ENCODE measurements at regions of chr11 and their contacts with region 1.

Region 1: DNA sequence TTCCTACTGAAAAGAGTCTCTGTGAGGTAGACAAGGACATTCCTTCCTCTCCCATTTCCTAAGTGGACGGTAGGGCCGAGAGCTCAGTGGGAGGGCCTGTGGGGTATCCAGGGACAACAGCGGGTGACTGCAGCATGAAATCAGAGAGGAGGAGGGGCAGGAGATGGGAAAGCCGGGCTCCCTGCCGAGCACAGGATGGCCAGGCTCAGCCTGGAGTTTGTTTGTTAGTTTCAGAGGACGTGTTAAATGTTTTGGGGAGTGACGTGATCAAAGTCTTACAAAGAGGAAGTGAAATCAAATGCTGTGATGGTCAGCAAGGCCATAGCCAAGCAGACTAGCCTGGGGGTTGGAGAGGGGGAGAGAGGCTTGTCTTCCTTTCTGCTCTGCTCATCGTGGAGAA is 152.7 kb downstream of the ADAMTS15 start:
- DNase-seq: peak; percentile 36 to 81 (median 69)
- H3K4me3 ChIP-seq: no peak overlapping the region
- H3K27ac ChIP-seq: no peak overlapping the region
- H3K4me1 ChIP-seq: no peaks in the 10 kb centered on the region
- H3K27me3 ChIP-seq: no peaks in the 10 kb centered on the region
- CTCF ChIP-seq: no peak
- EP300 ChIP-seq: no peak
- POLR2A ChIP-seq: no peak

Region 2: GRCh38 chr11:130124096-130124495 is 477.0 kb before region 1 on chr11:
- intact Hi-C with region 1: no loop called
- DNase-seq: peak in 1 of 5 donors; percentile 38
- H3K4me3 ChIP-seq: no peak overlapping the region
- H3K27ac ChIP-seq: no peak overlapping the region
- H3K4me1 ChIP-seq: no peaks in the 10 kb centered on the region
- H3K27me3 ChIP-seq: no peaks in the 10 kb centered on the region
- CTCF ChIP-seq: no peak
- EP300 ChIP-seq: no peak
- POLR2A ChIP-seq: no peak

Region 3: GRCh38 chr11:130427581-130428315 is 173.4 kb before region 1 on chr11:
- intact Hi-C with region 1: no loop called
- DNase-seq: peak in 2 of 5 donors; percentile 37 to 49
- H3K4me3 ChIP-seq: peak overlapping the region; percentile 38
- H3K27ac ChIP-seq: no peak overlapping the region
- H3K4me1 ChIP-seq: peaks cover 2% of the 10 kb centered on the region
- H3K27me3 ChIP-seq: no peaks in the 10 kb centered on the region
- CTCF ChIP-seq: no peak
- EP300 ChIP-seq: no peak
- POLR2A ChIP-seq: no peak

Region 4: GRCh38 chr11:130449996-130450769 is 151.0 kb before region 1 on chr11:
- intact Hi-C with region 1: loop called in 1 of 4 experiments (anchors 10 kb)
- DNase-seq: peak; percentile 48 to 83 (median 72)
- H3K4me3 ChIP-seq: peak overlapping the region; percentile 52
- H3K27ac ChIP-seq: no peak overlapping the region
- H3K4me1 ChIP-seq: peaks cover 6% of the 10 kb centered on the region
- H3K27me3 ChIP-seq: no peaks in the 10 kb centered on the region
- CTCF ChIP-seq: peak in 2 of 3 donors; percentile 7 to 59
- EP300 ChIP-seq: no peak
- POLR2A ChIP-seq: no peak

Region 5: DNA sequence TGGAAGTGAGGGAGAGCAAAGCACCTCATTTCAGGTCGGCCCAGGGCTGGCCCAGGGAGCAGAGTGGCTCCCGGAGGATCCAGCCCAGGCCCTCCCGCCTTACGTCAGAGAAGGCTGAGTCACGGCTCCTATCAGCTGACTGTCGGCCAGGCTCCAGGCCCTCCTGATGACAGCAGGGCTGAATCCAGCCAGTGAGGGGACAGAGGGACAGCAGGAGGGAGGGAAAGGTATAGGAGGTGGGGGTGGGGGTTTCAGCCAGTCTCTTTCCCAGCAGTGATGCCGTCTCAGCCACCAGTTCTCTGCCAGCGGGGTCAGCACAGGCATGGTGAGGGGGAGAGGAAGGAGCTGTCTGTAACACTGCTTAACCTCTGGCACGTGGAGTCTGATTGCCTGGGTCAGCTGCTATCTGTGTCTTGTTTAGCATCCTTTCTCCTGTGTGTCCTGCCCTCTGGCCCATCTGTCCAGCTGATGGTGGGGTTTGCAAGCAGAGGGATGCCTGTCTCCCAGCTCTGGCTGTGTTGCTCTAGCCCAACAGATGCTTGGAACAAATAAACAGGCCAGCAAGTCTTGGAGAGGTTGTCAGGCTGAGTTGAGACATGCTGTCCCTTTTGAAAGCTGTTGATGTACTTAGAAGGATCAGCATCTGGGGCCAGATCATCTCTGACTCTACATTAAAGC is 78.7 kb before region 1 on chr11:
- intact Hi-C with region 1: loop called in 1 of 4 experiments (anchors 10 kb)
- DNase-seq: peak; percentile 91 to 95 (median 92)
- H3K4me3 ChIP-seq: no peak overlapping the region
- H3K27ac ChIP-seq: peak overlapping the region; percentile 7 to 56
- H3K4me1 ChIP-seq: peaks cover 13% of the 10 kb centered on the region
- H3K27me3 ChIP-seq: no peaks in the 10 kb centered on the region
- CTCF ChIP-seq: no peak
- EP300 ChIP-seq: peak; percentile 22
- POLR2A ChIP-seq: no peak

Region 6: GRCh38 chr11:131561501-131561900 is 960.4 kb after region 1 on chr11:
- intact Hi-C with region 1: no loop called
- DNase-seq: no peak
- H3K4me3 ChIP-seq: no peak overlapping the region
- H3K27ac ChIP-seq: no peak overlapping the region
- H3K4me1 ChIP-seq: no peaks in the 10 kb centered on the region
- H3K27me3 ChIP-seq: no peaks in the 10 kb centered on the region
- CTCF ChIP-seq: no peak
- EP300 ChIP-seq: no peak
- POLR2A ChIP-seq: no peak

Measured in ovary (tissue), 10 donors.